Activated B cell treated with CpG ODN at 0.5 μM for 24 hours (primary cell): ENCODE measurements at regions of chr5 and their contacts with region 1.

Region 1: GRCh38 chr5:159198063-159199036 is 11.0 kb downstream of the RNF145 start:
- DNase-seq: no peak
- ATAC-seq: peak; percentile 98
- H3K4me3 Mint-ChIP-seq: peak overlapping the region; percentile 73
- H3K27ac Mint-ChIP-seq: peak overlapping the region; percentile 91
- H3K4me1 Mint-ChIP-seq: peaks cover 57% of the 10 kb centered on the region
- H3K27me3 Mint-ChIP-seq: no peaks in the 10 kb centered on the region
- CTCF ChIP-seq: no peak

Region 2: GRCh38 chr5:159184858-159185381 is 13.4 kb before region 1 on chr5:
- CTCF ChIA-PET with region 1: interaction called, 4 read pairs
- POLR2A ChIA-PET with region 1: interaction called, 16 read pairs
- intact Hi-C with region 1: loop called (anchors 1 kb)
- DNase-seq: no peak
- ATAC-seq: peak; percentile 65
- H3K4me3 Mint-ChIP-seq: peak overlapping the region; percentile 53
- H3K27ac Mint-ChIP-seq: peak overlapping the region; percentile 86
- H3K4me1 Mint-ChIP-seq: peaks cover 75% of the 10 kb centered on the region
- H3K27me3 Mint-ChIP-seq: no peaks in the 10 kb centered on the region
- CTCF ChIP-seq: no peak